Caco-2 (cell line): ENCODE measurements at regions of chr4 and their contacts with region 1.

Region 1: GRCh38 chr4:74531963-74532794 is 87.2 kb downstream of the AREG start:
- DNase-seq: peak; percentile 53 to 76
- H3K4me3 ChIP-seq: no peak overlapping the region
- H3K4me3 Mint-ChIP-seq: peak overlapping the region; percentile 15
- H3K27ac Mint-ChIP-seq: peak overlapping the region; percentile 93
- H3K4me1 ChIP-seq: peaks cover 77% of the 10 kb centered on the region
- H3K4me1 Mint-ChIP-seq: peaks cover 46% of the 10 kb centered on the region
- H3K27me3 ChIP-seq: no peaks in the 10 kb centered on the region
- H3K27me3 Mint-ChIP-seq: no peaks in the 10 kb centered on the region
- CTCF ChIP-seq: peak; percentile 57 to 71

Region 2: GRCh38 chr4:74376888-74377483 is 155.2 kb before region 1 on chr4:
- CTCF ChIA-PET with region 1: no interaction called
- POLR2A ChIA-PET with region 1: no interaction called
- intact Hi-C with region 1: loop called (anchors 1 kb)
- DNase-seq: peak in 1 of 2 experiments; percentile 30
- H3K4me3 ChIP-seq: no peak overlapping the region
- H3K4me3 Mint-ChIP-seq: no peak overlapping the region
- H3K27ac Mint-ChIP-seq: no peak overlapping the region
- H3K4me1 ChIP-seq: peaks cover 41% of the 10 kb centered on the region
- H3K4me1 Mint-ChIP-seq: peaks cover 9% of the 10 kb centered on the region
- H3K27me3 ChIP-seq: no peaks in the 10 kb centered on the region
- H3K27me3 Mint-ChIP-seq: no peaks in the 10 kb centered on the region
- CTCF ChIP-seq: peak; percentile 44 to 55

Region 3: GRCh38 chr4:74456056-74456744 is 76.0 kb before region 1 on chr4:
- CTCF ChIA-PET with region 1: interaction called, 3 read pairs
- POLR2A ChIA-PET with region 1: interaction called, 4 read pairs
- intact Hi-C with region 1: loop called (anchors 1 kb)
- DNase-seq: no peak
- H3K4me3 ChIP-seq: no peak overlapping the region
- H3K4me3 Mint-ChIP-seq: peak overlapping the region; percentile 4
- H3K27ac Mint-ChIP-seq: peak overlapping the region; percentile 77
- H3K4me1 ChIP-seq: peaks cover 16% of the 10 kb centered on the region; the same call in 1 of the 2 replicates
- H3K4me1 Mint-ChIP-seq: peaks cover 27% of the 10 kb centered on the region
- H3K27me3 ChIP-seq: no peaks in the 10 kb centered on the region
- H3K27me3 Mint-ChIP-seq: no peaks in the 10 kb centered on the region
- CTCF ChIP-seq: no peak

Region 4: DNA sequence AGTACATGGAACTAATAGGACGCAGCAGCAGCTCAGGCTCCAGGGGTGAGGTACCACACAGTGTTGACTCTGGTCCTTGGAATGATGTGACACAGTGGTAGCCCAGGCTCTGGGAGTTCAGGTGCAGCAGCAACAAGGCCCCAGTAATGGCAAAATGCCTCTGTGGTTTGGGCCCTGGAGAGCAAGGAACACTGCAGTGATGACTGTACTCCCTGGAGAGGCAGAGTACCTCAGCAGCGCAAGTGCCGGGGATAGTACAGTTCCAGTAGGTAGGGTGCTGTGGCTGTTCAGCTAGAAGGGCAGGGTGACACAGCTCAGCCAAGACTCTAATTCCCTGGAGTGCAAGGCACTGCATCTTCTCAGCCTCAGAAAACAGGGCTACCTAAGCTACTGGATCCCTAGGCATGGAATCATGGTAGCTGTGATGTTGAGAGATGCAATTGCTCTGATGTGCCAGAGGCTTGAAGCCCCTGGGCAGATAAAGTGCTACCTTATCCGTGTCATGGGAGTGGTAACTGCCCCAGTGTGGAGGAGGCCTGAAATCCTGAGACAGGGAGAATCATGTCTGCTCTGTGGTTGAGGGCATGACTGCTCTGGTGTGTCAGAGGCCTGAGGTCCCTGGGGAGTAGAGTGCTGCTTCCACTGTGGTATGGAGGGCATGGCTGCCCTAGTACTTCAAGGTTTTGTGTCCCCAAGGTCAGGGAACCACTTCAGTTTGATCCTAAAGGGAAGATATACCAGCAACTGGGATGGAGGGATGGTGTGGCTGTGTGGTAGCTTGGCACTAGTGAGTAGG is 32.0 kb before region 1 on chr4:
- CTCF ChIA-PET with region 1: no interaction called
- POLR2A ChIA-PET with region 1: no interaction called
- intact Hi-C with region 1: no loop called
- DNase-seq: no peak
- H3K4me3 ChIP-seq: no peak overlapping the region
- H3K4me3 Mint-ChIP-seq: no peak overlapping the region
- H3K27ac Mint-ChIP-seq: no peak overlapping the region
- H3K4me1 ChIP-seq: no peaks in the 10 kb centered on the region
- H3K4me1 Mint-ChIP-seq: no peaks in the 10 kb centered on the region
- H3K27me3 ChIP-seq: no peaks in the 10 kb centered on the region
- H3K27me3 Mint-ChIP-seq: no peaks in the 10 kb centered on the region
- CTCF ChIP-seq: no peak

Region 5: GRCh38 chr4:74608151-74608949 is 76.2 kb after region 1 on chr4:
- CTCF ChIA-PET with region 1: no interaction called
- POLR2A ChIA-PET with region 1: no interaction called
- intact Hi-C with region 1: loop called (anchors 1 kb)
- DNase-seq: peak; percentile 46 to 51
- H3K4me3 ChIP-seq: no peak overlapping the region
- H3K4me3 Mint-ChIP-seq: peak overlapping the region; percentile 48
- H3K27ac Mint-ChIP-seq: peak overlapping the region; percentile 9
- H3K4me1 ChIP-seq: peaks cover 56% of the 10 kb centered on the region
- H3K4me1 Mint-ChIP-seq: peaks cover 42% of the 10 kb centered on the region
- H3K27me3 ChIP-seq: no peaks in the 10 kb centered on the region
- H3K27me3 Mint-ChIP-seq: no peaks in the 10 kb centered on the region
- CTCF ChIP-seq: no peak